ENCODE measurements at regions of chr12 and their contacts with region 1.

Region 1: DNA sequence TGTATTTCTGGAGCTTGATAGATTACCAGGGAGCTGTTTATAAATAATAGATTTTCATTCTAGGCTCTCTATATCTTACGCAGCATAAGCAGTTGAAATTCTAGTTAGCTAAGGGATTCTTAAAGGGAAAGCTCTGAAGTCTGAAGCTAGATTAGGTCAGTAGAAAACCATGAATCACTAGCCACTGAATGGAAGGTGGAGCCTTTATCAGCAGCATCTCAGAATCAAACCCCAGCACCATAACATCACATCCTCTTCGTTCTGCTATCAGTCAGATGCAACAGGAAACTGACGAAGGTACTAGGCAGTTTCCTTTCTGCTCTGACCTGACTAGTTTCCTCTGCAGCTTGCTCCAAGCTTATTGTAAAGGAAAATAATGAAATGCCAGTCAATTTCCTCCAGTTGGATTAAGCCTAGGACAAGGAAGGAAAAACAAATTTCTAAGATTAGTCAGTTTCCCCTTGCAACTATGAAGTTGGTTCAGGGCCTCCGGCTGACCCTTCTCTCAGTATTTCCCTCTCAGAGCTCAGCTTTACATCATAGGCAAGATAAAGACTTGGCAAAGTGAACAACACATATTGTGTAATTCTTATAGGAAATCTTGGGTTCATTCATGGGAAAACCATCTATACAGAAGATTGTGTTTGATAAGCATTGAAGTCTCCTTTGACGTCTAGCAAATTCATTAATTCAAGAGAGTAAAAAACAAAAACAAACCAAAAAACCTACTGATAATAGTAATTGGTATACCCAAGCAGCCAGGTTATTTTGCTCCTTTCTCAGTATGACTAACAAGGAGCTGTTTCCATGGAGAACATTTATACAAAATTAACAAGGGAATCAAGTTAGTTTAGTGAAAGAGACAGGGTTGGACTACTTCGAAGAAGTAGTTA is 43.4 kb upstream of the CFAP54 start:
- DNase-seq: peak in 8 of 9 donors; percentile 50 to 83 (median 78)
- ATAC-seq: peak; percentile 97
- H3K4me3 ChIP-seq: peak overlapping the region; percentile 10
- H3K4me3 Mint-ChIP-seq: peak overlapping the region; percentile 6 to 76 (median 63)
- H3K27ac ChIP-seq: peak overlapping the region; percentile 80
- H3K27ac Mint-ChIP-seq: peak overlapping the region; percentile 83 to 97 (median 92)
- H3K4me1 ChIP-seq: peaks cover 23 to 26% of the 10 kb centered on the region in 2 donors
- H3K4me1 Mint-ChIP-seq: peaks cover 17 to 55% (median 46%) of the 10 kb centered on the region in 7 donors
- H3K27me3 ChIP-seq: no peaks in the 10 kb centered on the region
- H3K27me3 Mint-ChIP-seq: no peaks in the 10 kb centered on the region

Region 2: GRCh38 chr12:95940514-95940913 is 505.4 kb before region 1 on chr12:
- CTCF ChIA-PET with region 1: no interaction called
- POLR2A ChIA-PET with region 1: no interaction called
- intact Hi-C with region 1: no loop called
- DNase-seq: no peak
- ATAC-seq: no peak
- H3K4me3 ChIP-seq: no peak overlapping the region
- H3K4me3 Mint-ChIP-seq: no peak overlapping the region
- H3K27ac ChIP-seq: no peak overlapping the region
- H3K27ac Mint-ChIP-seq: peak overlapping the region in 2 of 9 donors; percentile 11 to 33
- H3K4me1 ChIP-seq: peaks cover 6% of the 10 kb centered on the region in 2 donors
- H3K4me1 Mint-ChIP-seq: peaks cover 4 to 12% (median 10%) of the 10 kb centered on the region in 7 donors
- H3K27me3 ChIP-seq: no peaks in the 10 kb centered on the region
- H3K27me3 Mint-ChIP-seq: peaks cover 0 to 23% (median 0%) of the 10 kb centered on the region in 5 donors

Region 3: DNA sequence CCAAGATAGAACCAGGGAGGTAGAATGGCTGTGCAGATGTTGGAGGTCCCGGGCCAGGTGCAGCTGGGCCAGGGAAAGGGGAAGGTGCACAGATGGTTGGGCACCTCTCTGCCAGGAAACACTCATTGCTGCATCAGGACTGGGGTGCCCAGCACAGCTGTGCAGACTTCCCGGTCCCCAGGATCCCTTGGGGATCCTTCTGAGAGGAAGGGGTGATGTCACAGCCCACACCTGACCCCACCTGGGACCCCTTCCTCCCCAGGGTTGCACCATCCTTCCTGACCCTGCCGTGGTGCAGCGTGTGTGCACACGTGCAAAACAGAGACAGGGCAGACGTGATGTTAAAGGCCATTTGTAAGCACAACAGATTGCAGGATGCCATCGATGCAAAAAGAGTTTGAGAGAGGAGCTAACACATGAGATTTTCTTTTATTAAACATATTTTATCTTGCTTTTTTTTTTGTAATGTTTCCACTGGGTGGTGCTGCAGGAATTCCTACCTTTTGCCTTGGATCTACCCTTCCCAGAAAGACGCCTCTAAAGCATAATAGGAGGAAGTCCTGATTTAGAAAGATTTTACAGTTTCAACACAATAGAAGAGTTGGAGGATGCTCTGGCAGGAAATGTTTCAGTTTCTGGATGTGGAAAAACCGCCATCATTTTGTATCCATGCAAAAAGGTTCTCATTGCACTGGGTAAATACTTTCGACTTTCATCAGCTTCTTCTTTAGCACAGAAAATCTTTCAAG is 237.0 kb before region 1 on chr12:
- CTCF ChIA-PET with region 1: no interaction called
- POLR2A ChIA-PET with region 1: no interaction called
- intact Hi-C with region 1: loop called in 1 of 2 experiments (anchors 5 kb)
- DNase-seq: no peak
- ATAC-seq: peak; percentile 15
- H3K4me3 ChIP-seq: no peak overlapping the region
- H3K4me3 Mint-ChIP-seq: peak overlapping the region; percentile 69 to 97 (median 85)
- H3K27ac ChIP-seq: peak overlapping the region; percentile 62
- H3K27ac Mint-ChIP-seq: peak overlapping the region; percentile 50 to 99 (median 96)
- H3K4me1 ChIP-seq: peaks cover 64 to 93% of the 10 kb centered on the region in 2 donors
- H3K4me1 Mint-ChIP-seq: peaks cover 70 to 100% (median 98%) of the 10 kb centered on the region in 7 donors
- H3K27me3 ChIP-seq: no peaks in the 10 kb centered on the region
- H3K27me3 Mint-ChIP-seq: no peaks in the 10 kb centered on the region

Region 4: DNA sequence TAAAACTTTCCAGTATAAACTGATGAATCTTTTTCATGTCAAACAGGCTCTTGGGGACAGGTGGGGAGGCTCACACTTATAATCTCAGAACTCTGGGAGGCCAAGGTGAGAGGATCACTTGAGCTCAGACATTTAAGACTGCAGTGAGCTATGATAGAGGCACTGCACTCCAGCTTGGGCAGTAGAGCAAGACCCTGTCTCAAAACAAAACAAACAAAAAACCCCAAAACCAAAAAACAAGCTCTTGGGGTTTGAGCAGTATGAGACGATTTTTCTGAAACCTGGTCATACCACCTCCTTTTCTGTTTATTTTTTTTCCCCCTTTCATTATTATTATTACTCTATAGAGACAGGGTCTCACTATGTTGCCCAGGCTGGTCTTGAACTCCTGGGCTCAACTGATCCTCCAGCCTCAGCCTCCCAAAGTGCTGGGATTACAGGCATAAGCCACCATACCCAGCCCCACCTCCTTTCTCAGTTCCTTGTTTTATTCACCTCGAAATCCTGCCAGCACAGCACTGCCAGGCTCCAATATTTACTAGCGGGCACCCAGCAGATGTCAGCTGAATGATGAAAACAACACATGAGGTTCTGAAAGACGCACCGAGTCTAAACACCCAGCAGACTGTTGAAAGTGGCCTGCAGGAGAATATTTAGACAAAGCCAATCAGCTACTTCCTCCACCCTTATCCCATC is 26.2 kb before region 1 on chr12:
- CTCF ChIA-PET with region 1: no interaction called
- POLR2A ChIA-PET with region 1: interaction called, 3 read pairs
- intact Hi-C with region 1: loop called (anchors 1 to 2 kb)
- DNase-seq: no peak
- ATAC-seq: no peak
- H3K4me3 ChIP-seq: no peak overlapping the region
- H3K4me3 Mint-ChIP-seq: peak overlapping the region in 1 of 10 donors; percentile 83
- H3K27ac ChIP-seq: no peak overlapping the region
- H3K27ac Mint-ChIP-seq: peak overlapping the region; percentile 32 to 92 (median 73)
- H3K4me1 ChIP-seq: peaks cover 0 to 7% of the 10 kb centered on the region in 2 donors
- H3K4me1 Mint-ChIP-seq: peaks cover 0 to 42% (median 25%) of the 10 kb centered on the region in 7 donors
- H3K27me3 ChIP-seq: no peaks in the 10 kb centered on the region
- H3K27me3 Mint-ChIP-seq: no peaks in the 10 kb centered on the region

Region 5: DNA sequence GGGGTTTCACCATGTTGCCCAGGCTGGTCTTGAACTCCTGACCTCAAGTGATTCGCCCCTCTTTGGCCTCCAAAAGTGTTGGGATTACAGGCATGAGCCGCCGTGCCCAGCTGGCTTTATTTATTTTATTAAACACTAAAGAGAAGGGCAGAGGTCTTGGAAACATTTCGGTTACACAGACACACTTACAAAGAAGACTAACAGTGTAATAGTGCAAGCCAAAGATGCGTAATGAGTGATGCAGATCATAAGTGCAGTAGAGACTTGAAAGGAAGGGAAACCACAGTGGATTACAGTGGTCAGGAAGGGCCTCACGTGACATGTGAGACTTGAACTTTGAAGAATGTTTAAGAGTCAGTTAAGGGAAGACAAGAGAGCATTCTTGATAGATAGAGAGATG is 11.8 kb before region 1 on chr12:
- CTCF ChIA-PET with region 1: interaction called, 3 read pairs
- POLR2A ChIA-PET with region 1: interaction called, 13 read pairs
- intact Hi-C with region 1: loop called (anchors 1 kb)
- DNase-seq: peak; percentile 10 to 92 (median 88)
- ATAC-seq: peak; percentile 100
- H3K4me3 ChIP-seq: no peak overlapping the region
- H3K4me3 Mint-ChIP-seq: peak overlapping the region; percentile 10 to 81 (median 64)
- H3K27ac ChIP-seq: peak overlapping the region; percentile 81
- H3K27ac Mint-ChIP-seq: peak overlapping the region; percentile 60 to 94 (median 84)
- H3K4me1 ChIP-seq: peaks cover 15 to 20% of the 10 kb centered on the region in 2 donors
- H3K4me1 Mint-ChIP-seq: peaks cover 24 to 52% (median 43%) of the 10 kb centered on the region in 7 donors
- H3K27me3 ChIP-seq: no peaks in the 10 kb centered on the region
- H3K27me3 Mint-ChIP-seq: no peaks in the 10 kb centered on the region

Region 6: DNA sequence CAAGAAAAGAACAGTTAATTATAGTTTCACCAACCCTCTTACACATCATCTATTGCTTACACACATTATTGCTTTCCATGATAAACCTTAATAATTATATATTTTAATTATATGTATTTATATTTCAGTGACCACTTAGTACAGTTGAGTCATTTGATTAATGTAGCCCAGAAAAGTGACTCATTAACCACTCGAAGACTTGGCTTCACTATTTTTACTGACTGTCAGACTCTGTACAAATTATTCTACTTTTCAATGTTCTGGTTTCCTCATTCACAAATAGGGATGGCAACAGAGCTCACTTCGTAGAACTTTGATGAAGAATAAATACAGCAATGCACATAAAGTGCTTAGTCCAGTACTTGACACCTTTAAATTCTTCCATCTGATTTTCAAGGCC is 141.8 kb after region 1 on chr12:
- CTCF ChIA-PET with region 1: no interaction called
- POLR2A ChIA-PET with region 1: no interaction called
- intact Hi-C with region 1: no loop called
- DNase-seq: no peak
- ATAC-seq: no peak
- H3K4me3 ChIP-seq: no peak overlapping the region
- H3K4me3 Mint-ChIP-seq: no peak overlapping the region
- H3K27ac ChIP-seq: no peak overlapping the region
- H3K27ac Mint-ChIP-seq: no peak overlapping the region
- H3K4me1 ChIP-seq: no peaks in the 10 kb centered on the region
- H3K4me1 Mint-ChIP-seq: no peaks in the 10 kb centered on the region
- H3K27me3 ChIP-seq: no peaks in the 10 kb centered on the region
- H3K27me3 Mint-ChIP-seq: peaks cover 0 to 29% (median 12%) of the 10 kb centered on the region in 5 donors